ENCODE measurements at regions of chr1 and their contacts with region 1.

Region 1: DNA sequence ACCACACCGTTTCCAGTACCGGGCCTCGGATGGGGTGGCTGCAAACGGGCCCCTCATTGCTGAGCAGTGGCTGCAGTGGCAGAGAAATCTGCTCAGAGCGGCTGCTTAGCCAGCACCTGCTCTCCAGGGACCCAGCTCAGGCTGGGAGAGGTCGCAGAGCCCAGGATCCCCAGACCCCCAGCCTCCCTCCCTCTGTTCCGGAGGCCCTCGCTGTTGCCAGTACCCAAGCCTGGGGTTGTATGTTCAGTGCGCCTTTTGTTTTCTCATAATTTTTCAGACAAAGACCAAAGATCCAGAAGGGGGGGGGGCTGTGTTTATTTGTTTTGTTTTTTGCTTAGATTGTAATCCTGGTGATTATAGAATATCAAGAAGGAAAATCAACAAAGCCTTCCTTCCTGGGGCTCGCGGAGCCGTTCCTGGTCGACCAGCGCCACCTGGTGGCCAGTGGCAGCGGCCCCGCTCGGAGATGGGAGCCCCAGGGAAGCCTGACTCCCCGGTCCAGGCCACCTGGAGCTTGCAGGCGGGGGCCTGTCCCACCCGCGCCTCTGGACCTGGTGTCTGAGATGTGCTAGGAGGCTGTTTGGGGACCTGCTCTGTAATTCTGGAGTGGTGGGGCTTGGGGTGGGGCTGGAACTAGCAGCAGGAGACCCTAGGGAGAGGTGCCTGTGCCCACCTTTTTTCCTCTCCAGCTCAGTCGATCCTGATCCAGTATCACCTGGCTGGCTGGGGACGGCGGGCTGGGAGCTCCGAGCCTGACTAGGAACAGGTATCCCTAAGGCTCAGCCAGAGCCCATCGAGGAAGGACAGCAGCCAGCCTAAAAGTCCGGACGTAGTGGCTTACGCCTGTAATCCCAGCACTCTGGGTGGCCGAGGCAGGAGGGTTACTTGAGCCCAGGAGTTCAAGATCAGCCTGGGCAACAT is 123.9 kb upstream of the VAMP3 start:
- DNase-seq: no peak

Region 2: DNA sequence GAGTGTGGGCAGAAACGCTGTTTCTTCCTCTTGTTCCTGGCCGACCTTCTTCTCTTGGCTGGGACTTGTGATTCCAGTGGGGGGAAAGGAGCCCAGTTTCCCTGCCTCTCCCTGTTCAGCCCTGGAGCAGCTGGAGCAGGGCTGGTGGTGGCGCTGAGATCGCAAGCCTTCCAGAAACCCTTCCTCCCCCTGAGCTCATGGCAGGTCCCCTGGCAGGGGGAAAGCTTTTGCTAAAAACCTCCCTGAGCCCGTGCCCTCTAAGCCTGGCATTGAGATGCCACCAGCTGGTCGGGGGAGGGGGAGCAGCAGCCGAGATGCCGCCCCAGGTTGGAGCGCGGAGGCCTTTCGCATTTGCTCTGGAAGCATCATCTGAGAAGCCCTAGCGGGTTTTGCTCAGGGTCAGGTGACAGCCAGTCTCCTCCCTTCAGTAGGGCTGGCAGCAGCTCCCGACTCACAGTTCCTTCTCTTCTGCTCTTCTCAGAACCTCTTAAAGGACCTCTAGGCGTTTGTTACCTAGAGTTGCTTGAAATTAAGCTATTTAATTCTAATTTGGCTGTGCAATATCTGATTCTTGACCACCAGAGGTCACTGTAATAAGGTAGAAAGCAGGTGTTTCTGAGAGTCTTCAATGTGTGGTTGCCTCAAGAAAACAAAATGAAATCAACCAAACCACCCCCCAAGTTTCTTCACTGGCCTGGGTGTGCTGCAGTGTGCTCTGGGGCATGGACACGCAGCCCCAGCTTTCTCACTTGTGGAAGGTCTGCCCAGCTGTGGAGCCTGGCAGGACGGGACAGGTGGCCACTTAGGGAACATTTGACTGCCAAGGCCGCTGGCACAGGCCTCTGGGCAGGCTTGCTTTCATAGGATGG is 604.7 kb before region 1 on chr1:
- intact Hi-C with region 1: loop called (anchors 5 kb)
- DNase-seq: peak; percentile 33

Region 3: GRCh38 chr1:7366955-7367665 is 280.1 kb before region 1 on chr1:
- intact Hi-C with region 1: loop called (anchors 10 kb)
- DNase-seq: no peak

Region 4: GRCh38 chr1:7516341-7516740 is 130.9 kb before region 1 on chr1:
- intact Hi-C with region 1: loop called (anchors 5 kb)
- DNase-seq: no peak

Region 5: DNA sequence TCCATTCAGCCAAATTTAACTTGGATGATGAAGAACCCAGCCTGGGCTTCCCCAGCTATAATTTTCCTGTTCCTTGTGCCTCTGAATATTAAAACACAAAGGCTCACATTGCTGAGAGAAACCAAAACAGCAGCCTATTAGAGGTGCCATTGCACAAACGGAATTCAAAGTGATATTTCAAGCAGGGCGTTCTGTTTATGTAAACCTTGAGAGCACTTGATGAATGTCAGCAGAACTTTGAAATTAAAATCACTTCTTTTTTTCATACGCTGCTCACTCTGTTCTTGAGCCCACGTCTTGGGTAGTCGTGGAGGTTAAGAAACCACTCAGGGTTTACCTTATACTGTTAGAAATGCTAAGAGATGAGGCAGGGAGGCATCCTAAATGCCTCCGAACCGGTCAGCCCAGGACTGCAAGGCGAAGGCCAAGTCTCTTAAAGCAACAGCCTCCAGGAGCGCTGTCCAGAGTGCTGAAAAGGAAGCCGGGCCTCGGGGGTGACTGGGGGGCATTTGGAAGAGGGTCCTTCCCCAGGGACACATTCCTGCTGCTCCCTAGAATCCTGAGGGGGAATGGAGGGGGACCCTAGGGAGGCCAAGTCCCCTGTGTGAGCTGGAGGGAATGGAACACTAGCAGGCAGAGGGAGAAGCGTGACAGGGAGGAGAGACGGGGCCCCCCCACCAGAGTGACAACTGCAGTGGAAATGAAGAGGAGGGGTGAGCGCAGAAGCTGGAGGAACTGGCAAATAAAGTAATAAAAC is 31.0 kb before region 1 on chr1:
- intact Hi-C with region 1: loop called (anchors 2 kb)
- DNase-seq: peak; percentile 86

Region 6: DNA sequence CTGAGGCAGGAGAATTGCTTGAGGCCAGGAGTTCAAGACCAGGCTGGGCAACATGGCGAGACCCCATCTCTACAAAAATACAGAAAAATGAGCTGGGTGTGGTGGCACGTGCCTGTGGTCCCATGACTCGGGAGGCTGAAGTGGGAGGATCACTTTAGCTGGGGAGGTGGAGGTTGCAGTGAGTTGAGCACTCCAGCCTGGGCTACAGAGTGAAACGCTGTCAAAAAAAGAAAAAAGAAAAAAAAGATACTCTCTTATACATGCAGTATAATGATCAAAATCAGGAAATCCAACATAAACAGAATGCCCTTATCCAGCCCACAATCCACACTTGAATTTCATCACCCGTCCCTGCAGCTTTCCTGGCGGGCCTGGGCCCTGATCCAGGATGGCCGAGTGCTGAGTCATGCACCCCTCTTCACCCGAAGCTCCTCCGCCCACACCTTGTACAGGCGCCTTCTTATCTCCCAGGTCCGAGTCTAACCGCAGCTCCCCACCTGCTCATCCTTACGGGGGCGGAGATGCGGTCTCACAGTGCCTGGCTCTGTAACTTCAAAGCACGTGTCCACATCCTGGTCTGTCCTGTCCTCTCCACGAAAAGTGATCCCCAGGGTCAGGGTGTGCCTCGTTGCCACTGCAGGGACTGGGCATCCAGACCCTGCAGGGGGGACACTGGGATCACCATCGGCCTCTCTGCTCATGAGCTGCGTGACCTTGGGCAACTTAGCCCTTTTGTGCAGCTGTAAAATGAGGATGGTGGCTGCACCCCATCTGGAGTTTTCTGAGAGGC is 550.4 kb after region 1 on chr1:
- intact Hi-C with region 1: no loop called
- DNase-seq: no peak

Measured in cardiac septum (tissue), 1 donor.